ENCODE measurements at regions of chr5 and their contacts with region 1.

Region 1: GRCh38 chr5:40736103-40736875 is 19.5 kb downstream of the TTC33 start:
- DNase-seq: peak in 3 of 14 experiments; percentile 70 to 78 (median 77)
- ATAC-seq: peak; percentile 72
- H3K4me3 ChIP-seq: no peak overlapping the region
- H3K4me3 Mint-ChIP-seq: no peak overlapping the region
- H3K27ac ChIP-seq: no peak overlapping the region
- H3K27ac Mint-ChIP-seq: no peak overlapping the region
- H3K4me1 ChIP-seq: no peaks in the 10 kb centered on the region
- H3K4me1 Mint-ChIP-seq: peaks cover 38% of the 10 kb centered on the region
- H3K27me3 ChIP-seq: no peaks in the 10 kb centered on the region
- H3K27me3 Mint-ChIP-seq: no peaks in the 10 kb centered on the region
- CTCF ChIP-seq: peak; percentile 80

Region 2: GRCh38 chr5:39578887-39579497 is 1157.3 kb before region 1 on chr5:
- CTCF ChIA-PET with region 1: no interaction called
- POLR2A ChIA-PET with region 1: no interaction called
- intact Hi-C with region 1: loop called (anchors 1 to 5 kb)
- DNase-seq: peak in 3 of 14 experiments; percentile 21 to 52 (median 31)
- ATAC-seq: no peak
- H3K4me3 ChIP-seq: no peak overlapping the region
- H3K4me3 Mint-ChIP-seq: no peak overlapping the region
- H3K27ac ChIP-seq: no peak overlapping the region
- H3K27ac Mint-ChIP-seq: no peak overlapping the region
- H3K4me1 ChIP-seq: no peaks in the 10 kb centered on the region
- H3K4me1 Mint-ChIP-seq: peaks cover 10% of the 10 kb centered on the region
- H3K27me3 ChIP-seq: no peaks in the 10 kb centered on the region
- H3K27me3 Mint-ChIP-seq: peaks cover 6% of the 10 kb centered on the region
- CTCF ChIP-seq: peak; percentile 91

Region 3: DNA sequence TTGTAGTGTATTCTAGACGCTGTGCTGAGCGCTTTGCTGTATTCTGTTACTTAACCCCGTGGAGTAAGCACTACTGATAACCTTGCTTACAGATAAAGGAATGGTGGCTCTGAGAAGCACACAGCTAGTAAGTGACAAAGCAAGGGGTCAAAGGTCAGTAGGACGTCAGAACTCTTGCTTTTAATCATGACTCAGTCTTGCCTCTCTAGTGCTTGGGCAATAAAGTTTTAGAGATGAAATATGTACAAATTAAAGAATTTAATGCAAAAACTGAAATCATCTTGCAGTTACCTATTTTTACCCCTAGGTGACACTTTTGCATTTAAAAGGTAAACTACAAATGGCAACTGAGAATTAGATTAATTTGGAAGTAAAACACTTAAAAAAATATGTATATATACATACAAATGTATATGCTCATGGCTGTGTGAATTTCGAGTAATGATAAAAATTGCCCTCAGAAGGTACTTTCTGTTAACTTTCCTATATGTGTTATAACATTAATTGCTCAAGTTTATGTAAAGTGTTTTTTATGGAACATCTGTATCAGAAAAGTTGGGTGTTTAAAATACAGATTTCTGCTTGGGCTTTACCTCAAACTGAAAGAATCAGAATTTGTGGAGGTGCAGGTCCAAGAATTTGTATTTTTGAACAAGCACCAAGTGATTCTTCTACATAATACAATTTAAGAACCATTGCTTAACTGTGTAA is 1136.4 kb before region 1 on chr5:
- CTCF ChIA-PET with region 1: no interaction called
- POLR2A ChIA-PET with region 1: no interaction called
- intact Hi-C with region 1: loop called in 1 of 2 experiments (anchors 5 kb)
- DNase-seq: peak in 2 of 14 experiments; percentile 18 to 29
- ATAC-seq: no peak
- H3K4me3 ChIP-seq: no peak overlapping the region
- H3K4me3 Mint-ChIP-seq: no peak overlapping the region
- H3K27ac ChIP-seq: no peak overlapping the region
- H3K27ac Mint-ChIP-seq: no peak overlapping the region
- H3K4me1 ChIP-seq: no peaks in the 10 kb centered on the region
- H3K4me1 Mint-ChIP-seq: no peaks in the 10 kb centered on the region
- H3K27me3 ChIP-seq: peaks cover 5 to 25% of the 10 kb centered on the region in 2 experiments
- H3K27me3 Mint-ChIP-seq: peaks cover 46% of the 10 kb centered on the region
- CTCF ChIP-seq: peak; percentile 66

Region 4: DNA sequence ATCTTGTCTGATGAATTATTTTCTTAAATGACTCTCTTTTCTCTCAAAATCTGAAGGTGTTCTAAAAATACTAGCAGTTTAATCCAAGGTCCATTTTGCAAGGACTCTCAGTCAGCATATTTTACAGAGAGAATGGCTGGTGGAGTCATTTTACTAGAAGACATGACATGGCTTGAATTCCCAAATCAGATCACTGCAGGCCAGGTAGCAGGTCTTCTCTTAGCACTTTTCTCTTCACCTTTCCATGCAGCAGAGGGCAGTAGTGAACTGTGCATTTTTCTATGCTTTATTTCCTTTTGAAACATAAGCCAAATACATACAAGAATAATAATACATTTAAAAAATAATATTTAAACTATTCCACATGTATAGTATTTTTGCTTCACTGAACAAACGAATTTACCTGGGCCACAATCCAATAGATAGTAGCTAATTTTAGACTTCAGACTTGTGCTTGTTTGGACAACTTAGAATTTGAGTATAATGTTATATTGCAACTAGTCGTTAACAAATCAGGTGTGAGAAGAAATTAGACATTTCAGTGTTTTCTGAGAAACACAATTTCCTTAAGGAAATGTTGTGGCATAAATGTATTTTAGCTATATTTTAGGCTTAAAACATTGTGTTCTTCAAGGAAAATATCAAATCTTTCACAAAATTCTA is 1022.1 kb before region 1 on chr5:
- CTCF ChIA-PET with region 1: interaction called, 4 read pairs
- POLR2A ChIA-PET with region 1: no interaction called
- intact Hi-C with region 1: loop called (anchors 1 to 2 kb)
- DNase-seq: peak in 11 of 14 experiments; percentile 6 to 71 (median 18)
- ATAC-seq: peak; percentile 34
- H3K4me3 ChIP-seq: no peak overlapping the region
- H3K4me3 Mint-ChIP-seq: no peak overlapping the region
- H3K27ac ChIP-seq: no peak overlapping the region
- H3K27ac Mint-ChIP-seq: no peak overlapping the region
- H3K4me1 ChIP-seq: no peaks in the 10 kb centered on the region
- H3K4me1 Mint-ChIP-seq: no peaks in the 10 kb centered on the region
- H3K27me3 ChIP-seq: peaks cover under 1 to 2% of the 10 kb centered on the region in 2 experiments
- H3K27me3 Mint-ChIP-seq: peaks cover 11% of the 10 kb centered on the region
- CTCF ChIP-seq: peak; percentile 61

Region 5: DNA sequence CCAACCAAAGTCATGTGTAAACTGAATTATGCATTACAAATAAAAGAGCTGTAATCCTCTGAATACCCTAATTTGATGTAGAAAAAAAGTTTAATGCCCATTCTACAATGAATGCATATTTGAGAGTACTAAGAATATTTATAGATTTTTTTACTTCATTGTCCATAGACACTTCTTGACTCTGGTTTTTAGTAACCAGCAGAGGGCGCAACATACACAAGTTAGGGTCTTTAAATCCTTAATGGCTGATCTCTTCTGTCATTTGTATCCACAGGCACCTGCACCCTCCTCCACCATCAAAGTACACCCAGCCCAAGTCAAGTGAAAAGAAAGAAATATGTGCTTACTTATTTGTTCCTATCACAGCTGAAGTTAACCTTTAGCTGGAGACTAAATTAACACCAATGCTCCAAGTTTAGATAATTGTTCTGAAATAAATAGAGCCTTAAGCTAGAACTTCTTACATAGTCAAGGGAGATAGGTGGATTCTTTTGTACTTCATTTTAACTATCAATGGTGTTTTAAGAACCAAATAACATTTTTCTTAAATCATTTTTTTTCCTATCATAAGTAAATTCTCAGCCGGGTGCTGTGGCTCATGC is 787.3 kb before region 1 on chr5:
- CTCF ChIA-PET with region 1: interaction called, 3 read pairs
- POLR2A ChIA-PET with region 1: no interaction called
- intact Hi-C with region 1: loop called (anchors 1 to 2 kb)
- DNase-seq: peak; percentile 7 to 85 (median 50)
- ATAC-seq: peak; percentile 77
- H3K4me3 ChIP-seq: no peak overlapping the region
- H3K4me3 Mint-ChIP-seq: no peak overlapping the region
- H3K27ac ChIP-seq: no peak overlapping the region
- H3K27ac Mint-ChIP-seq: no peak overlapping the region
- H3K4me1 ChIP-seq: no peaks in the 10 kb centered on the region
- H3K4me1 Mint-ChIP-seq: peaks cover 5% of the 10 kb centered on the region
- H3K27me3 ChIP-seq: no peaks in the 10 kb centered on the region
- H3K27me3 Mint-ChIP-seq: no peaks in the 10 kb centered on the region
- CTCF ChIP-seq: peak; percentile 72

Region 6: DNA sequence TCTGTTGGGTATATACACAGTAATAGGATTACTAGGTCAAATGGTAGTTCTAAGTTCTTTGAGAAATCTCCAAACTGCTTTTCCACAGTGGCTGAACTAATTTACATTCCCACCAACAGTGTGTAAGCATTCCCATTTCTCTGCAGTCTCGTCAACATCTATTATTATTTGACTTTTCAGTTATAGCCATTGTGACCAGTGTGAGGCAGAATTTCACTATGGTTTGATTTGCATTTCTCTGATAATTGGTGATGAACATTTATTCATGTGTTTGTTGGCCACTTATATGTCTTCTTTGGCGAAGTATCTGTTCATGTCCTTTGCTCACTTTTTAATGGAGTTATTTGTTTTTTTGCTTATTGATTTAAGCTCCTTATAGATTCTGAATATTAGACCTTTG is 715.3 kb before region 1 on chr5:
- CTCF ChIA-PET with region 1: no interaction called
- POLR2A ChIA-PET with region 1: no interaction called
- intact Hi-C with region 1: loop called in 1 of 2 experiments (anchors 2 kb)
- DNase-seq: peak in 3 of 14 experiments; percentile 11 to 27 (median 17)
- ATAC-seq: no peak
- H3K4me3 ChIP-seq: no peak overlapping the region
- H3K4me3 Mint-ChIP-seq: no peak overlapping the region
- H3K27ac ChIP-seq: no peak overlapping the region
- H3K27ac Mint-ChIP-seq: no peak overlapping the region
- H3K4me1 ChIP-seq: no peaks in the 10 kb centered on the region
- H3K4me1 Mint-ChIP-seq: no peaks in the 10 kb centered on the region
- H3K27me3 ChIP-seq: no peaks in the 10 kb centered on the region
- H3K27me3 Mint-ChIP-seq: no peaks in the 10 kb centered on the region
- CTCF ChIP-seq: no peak

Region 7: DNA sequence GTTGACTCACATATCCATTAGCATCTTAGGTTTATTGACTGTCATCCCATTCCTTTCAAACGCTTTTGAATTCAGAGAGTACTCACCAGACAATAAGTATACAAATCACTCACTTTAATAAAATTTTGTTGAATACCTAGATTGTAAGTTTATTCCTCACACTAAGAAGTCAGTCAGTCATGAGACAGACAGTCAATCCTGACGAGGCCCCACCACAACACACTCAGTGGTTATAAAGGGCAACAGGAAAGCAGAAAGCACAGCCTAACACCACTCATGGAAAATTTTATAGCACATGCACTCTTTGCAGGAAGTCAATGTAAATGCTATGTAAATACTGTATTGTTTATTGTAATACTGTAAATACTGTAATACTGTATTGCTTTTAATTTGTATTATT is 232.8 kb before region 1 on chr5:
- CTCF ChIA-PET with region 1: no interaction called
- POLR2A ChIA-PET with region 1: no interaction called
- intact Hi-C with region 1: loop called in 1 of 2 experiments (anchors 2 kb)
- DNase-seq: peak in 2 of 14 experiments; percentile 16 to 30
- ATAC-seq: peak; percentile 41
- H3K4me3 ChIP-seq: no peak overlapping the region
- H3K4me3 Mint-ChIP-seq: no peak overlapping the region
- H3K27ac ChIP-seq: no peak overlapping the region
- H3K27ac Mint-ChIP-seq: no peak overlapping the region
- H3K4me1 ChIP-seq: peaks cover 3% of the 10 kb centered on the region
- H3K4me1 Mint-ChIP-seq: peaks cover 6% of the 10 kb centered on the region
- H3K27me3 ChIP-seq: no peaks in the 10 kb centered on the region
- H3K27me3 Mint-ChIP-seq: no peaks in the 10 kb centered on the region
- CTCF ChIP-seq: no peak

Region 8: DNA sequence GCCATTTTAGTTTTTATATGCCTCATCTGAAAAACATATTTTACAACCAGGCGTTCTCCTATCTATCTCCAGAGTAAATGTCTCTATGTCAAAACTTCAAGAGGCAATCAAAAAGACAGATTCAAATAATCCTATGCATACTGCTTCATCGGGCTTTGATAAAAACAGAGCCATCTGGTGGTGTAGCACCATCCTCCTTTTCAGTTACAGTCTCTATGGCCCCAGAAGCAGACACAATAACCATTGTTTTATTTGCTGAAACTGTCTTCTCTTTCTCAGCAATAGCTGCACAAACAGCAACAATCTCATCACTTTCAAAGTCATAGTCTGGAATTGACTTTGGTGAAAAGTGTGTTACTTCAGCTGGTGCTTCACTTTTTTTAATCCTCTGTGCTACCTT is 20.3 kb before region 1 on chr5:
- CTCF ChIA-PET with region 1: no interaction called
- POLR2A ChIA-PET with region 1: no interaction called
- intact Hi-C with region 1: no loop called
- DNase-seq: peak in 1 of 14 experiments; percentile 30
- ATAC-seq: no peak
- H3K4me3 ChIP-seq: no peak overlapping the region
- H3K4me3 Mint-ChIP-seq: no peak overlapping the region
- H3K27ac ChIP-seq: no peak overlapping the region
- H3K27ac Mint-ChIP-seq: peak overlapping the region; percentile 22
- H3K4me1 ChIP-seq: no peaks in the 10 kb centered on the region
- H3K4me1 Mint-ChIP-seq: peaks cover 16% of the 10 kb centered on the region
- H3K27me3 ChIP-seq: no peaks in the 10 kb centered on the region
- H3K27me3 Mint-ChIP-seq: no peaks in the 10 kb centered on the region
- CTCF ChIP-seq: no peak